Naive thymus-derived CD8-positive, alpha-beta T cell (primary cell): ENCODE measurements at regions of chr3 and their contacts with region 1.

Region 1: GRCh38 chr3:59882746-59883145 is 832.9 kb upstream of the CFAP20DC start:
- DNase-seq: no peak
- ATAC-seq: no peak
- H3K4me3 Mint-ChIP-seq: no peak overlapping the region
- H3K27ac Mint-ChIP-seq: peak overlapping the region in 2 of 10 donors; percentile 4 to 8
- H3K4me1 Mint-ChIP-seq: peaks cover 38 to 65% (median 56%) of the 10 kb centered on the region in 4 donors
- H3K27me3 Mint-ChIP-seq: no peaks in the 10 kb centered on the region

Region 2: GRCh38 chr3:59866076-59866475 is 16.7 kb before region 1 on chr3:
- POLR2A ChIA-PET with region 1: interaction called, 10 read pairs
- DNase-seq: no peak
- ATAC-seq: no peak
- H3K4me3 Mint-ChIP-seq: peak overlapping the region in 1 of 10 donors; percentile 1
- H3K27ac Mint-ChIP-seq: peak overlapping the region in 5 of 10 donors; percentile 23 to 63 (median 49)
- H3K4me1 Mint-ChIP-seq: peaks cover 15 to 32% (median 24%) of the 10 kb centered on the region in 4 donors
- H3K27me3 Mint-ChIP-seq: no peaks in the 10 kb centered on the region